Naive thymus-derived CD4-positive, alpha-beta T cell (primary cell): ENCODE measurements at regions of chr3 and their contacts with region 1.

Region 1: DNA sequence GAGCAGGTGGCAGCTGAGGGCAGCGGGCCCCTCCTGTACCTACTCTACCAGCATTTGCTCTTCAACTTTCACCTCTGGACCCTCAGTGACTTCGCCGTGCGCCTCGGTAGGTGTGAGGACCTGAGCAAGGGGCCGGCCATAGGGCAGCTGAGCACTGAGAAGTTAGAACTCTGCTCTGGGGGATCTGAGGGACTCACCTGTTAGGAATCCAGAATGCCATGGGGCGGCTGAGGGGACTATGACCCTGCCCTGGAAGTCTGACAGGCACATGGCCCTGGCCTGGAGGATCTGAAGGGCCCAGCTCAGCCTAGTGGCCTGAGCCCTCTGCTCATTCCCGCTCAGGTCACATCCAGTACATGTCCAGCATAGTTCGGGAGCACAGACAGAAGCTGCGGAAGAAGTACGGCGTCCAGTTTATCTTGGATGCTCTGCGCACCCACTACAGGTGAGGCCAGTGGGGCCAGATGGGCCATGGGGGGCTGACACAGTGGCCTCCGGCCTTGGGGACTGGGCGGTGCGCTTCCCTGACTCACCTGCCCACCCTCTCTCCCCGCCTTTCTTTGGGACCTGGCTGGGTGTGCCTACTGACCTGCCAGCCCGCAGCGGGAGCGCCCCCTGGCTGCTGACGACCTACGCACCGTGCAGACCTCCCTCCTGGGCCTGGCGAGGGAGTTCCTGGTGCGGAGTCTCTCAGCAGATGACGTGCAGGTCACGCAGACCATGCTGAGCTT is 18.8 kb downstream of the NBEAL2 start:
- DNase-seq: peak; percentile 53 to 84 (median 69)
- ATAC-seq: peak; percentile 85
- H3K4me3 ChIP-seq: no peak overlapping the region
- H3K4me3 Mint-ChIP-seq: no peak overlapping the region
- H3K27ac ChIP-seq: no peak overlapping the region
- H3K27ac Mint-ChIP-seq: peak overlapping the region in 5 of 9 donors; percentile 41 to 79 (median 55)
- H3K4me1 ChIP-seq: peaks cover 0 to 10% of the 10 kb centered on the region in 2 donors
- H3K4me1 Mint-ChIP-seq: peaks cover 7 to 18% (median 11%) of the 10 kb centered on the region in 7 donors
- H3K27me3 ChIP-seq: no peaks in the 10 kb centered on the region
- H3K27me3 Mint-ChIP-seq: no peaks in the 10 kb centered on the region

Region 2: DNA sequence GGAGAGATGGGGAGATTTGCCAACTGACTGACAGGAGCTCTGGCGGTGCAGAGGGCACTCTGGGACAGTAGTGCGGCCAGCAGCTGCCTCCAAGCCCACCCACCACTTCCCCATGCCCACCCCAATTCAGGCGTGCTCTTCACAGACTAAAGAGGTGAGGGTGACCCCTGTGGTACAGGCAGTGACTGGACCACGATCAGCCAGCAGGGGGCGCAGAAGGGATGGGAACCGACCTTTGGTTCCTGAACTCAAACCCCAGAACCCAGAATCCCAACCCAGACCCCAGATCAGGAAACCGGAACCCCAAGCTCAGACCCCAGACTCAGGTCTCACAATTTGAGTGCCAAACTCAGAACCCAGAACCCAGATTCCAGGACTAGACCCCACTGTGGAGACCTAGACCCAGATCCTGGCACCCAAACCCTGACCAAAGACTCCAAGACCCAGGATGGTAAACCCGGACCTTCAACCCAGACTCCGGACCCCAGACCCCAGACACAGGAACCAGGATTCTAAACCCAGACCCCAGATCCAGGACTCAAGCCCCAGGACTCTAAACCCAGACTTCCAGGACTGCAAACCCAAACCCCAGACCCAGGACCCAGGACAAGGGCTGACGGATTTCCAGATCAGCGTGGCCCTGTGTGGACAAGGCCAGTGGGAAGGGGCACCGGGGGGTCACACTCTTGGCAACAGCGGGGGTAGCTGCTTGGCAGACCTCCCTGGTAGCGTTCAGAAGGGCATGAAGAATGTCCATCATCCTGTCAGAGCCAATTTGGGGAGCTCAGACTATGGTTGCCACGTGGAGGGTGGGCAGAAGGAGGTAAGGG is 131.4 kb before region 1 on chr3:
- CTCF ChIA-PET with region 1: interaction called, 3 read pairs
- POLR2A ChIA-PET with region 1: no interaction called
- intact Hi-C with region 1: loop called in 1 of 2 experiments (anchors 2 kb)
- DNase-seq: peak; percentile 38 to 80 (median 66)
- ATAC-seq: peak; percentile 69
- H3K4me3 ChIP-seq: no peak overlapping the region
- H3K4me3 Mint-ChIP-seq: no peak overlapping the region
- H3K27ac ChIP-seq: no peak overlapping the region
- H3K27ac Mint-ChIP-seq: peak overlapping the region in 1 of 9 donors; percentile 21
- H3K4me1 ChIP-seq: no peaks in the 10 kb centered on the region
- H3K4me1 Mint-ChIP-seq: no peaks in the 10 kb centered on the region
- H3K27me3 ChIP-seq: no peaks in the 10 kb centered on the region
- H3K27me3 Mint-ChIP-seq: peaks cover 0 to 8% (median 0%) of the 10 kb centered on the region in 5 donors

Region 3: DNA sequence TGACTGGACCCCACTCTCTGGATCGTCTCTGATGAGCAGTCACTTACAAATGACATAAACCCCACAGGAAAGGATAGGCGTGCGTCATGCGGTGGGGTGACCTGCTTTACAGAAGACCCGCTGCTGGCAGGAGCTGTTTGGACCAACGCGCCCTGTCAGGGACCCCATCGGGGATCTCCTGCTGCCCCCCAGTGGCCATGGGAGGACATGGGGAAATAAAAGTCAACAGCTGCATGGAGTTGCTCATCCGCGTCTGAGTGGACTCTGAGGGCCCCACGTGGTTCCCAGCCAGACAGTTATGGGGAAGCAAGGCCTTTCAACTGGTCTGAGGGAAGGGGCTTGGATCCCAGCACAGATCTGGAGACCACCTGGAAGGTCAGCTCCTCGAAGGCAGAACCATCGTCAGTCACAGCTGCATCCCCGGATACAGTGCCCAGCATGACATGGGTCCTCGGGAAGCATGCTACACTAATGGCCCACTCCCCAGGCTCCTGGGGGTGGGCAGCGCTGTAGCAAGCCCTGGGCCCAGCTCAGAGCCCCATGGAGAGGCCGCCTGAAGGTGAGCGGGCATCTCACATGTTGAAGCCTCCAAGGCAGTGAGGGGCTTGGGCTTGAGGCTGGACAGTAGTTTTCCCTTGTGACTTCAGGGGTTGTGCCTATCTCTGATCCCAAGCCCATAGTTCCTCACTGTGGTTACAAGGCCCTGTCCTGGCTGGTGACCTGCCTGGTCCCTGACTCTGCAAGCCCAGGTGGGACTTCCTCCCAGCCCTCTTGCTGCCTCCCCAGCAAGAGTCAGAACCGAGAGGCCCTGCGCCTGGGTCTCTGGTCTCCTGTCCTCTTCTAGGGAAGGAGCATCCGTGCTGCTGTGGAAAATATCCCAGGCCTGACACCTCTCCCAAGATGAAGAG is 88.5 kb before region 1 on chr3:
- CTCF ChIA-PET with region 1: interaction called, 6 read pairs
- POLR2A ChIA-PET with region 1: no interaction called
- intact Hi-C with region 1: loop called in 1 of 2 experiments (anchors 1 kb)
- DNase-seq: peak; percentile 42 to 76 (median 64)
- ATAC-seq: peak; percentile 89
- H3K4me3 ChIP-seq: no peak overlapping the region
- H3K4me3 Mint-ChIP-seq: no peak overlapping the region
- H3K27ac ChIP-seq: no peak overlapping the region
- H3K27ac Mint-ChIP-seq: peak overlapping the region in 1 of 9 donors; percentile 6
- H3K4me1 ChIP-seq: peaks cover 11 to 17% of the 10 kb centered on the region in 2 donors
- H3K4me1 Mint-ChIP-seq: peaks cover 8 to 19% (median 17%) of the 10 kb centered on the region in 7 donors
- H3K27me3 ChIP-seq: no peaks in the 10 kb centered on the region
- H3K27me3 Mint-ChIP-seq: no peaks in the 10 kb centered on the region

Region 4: DNA sequence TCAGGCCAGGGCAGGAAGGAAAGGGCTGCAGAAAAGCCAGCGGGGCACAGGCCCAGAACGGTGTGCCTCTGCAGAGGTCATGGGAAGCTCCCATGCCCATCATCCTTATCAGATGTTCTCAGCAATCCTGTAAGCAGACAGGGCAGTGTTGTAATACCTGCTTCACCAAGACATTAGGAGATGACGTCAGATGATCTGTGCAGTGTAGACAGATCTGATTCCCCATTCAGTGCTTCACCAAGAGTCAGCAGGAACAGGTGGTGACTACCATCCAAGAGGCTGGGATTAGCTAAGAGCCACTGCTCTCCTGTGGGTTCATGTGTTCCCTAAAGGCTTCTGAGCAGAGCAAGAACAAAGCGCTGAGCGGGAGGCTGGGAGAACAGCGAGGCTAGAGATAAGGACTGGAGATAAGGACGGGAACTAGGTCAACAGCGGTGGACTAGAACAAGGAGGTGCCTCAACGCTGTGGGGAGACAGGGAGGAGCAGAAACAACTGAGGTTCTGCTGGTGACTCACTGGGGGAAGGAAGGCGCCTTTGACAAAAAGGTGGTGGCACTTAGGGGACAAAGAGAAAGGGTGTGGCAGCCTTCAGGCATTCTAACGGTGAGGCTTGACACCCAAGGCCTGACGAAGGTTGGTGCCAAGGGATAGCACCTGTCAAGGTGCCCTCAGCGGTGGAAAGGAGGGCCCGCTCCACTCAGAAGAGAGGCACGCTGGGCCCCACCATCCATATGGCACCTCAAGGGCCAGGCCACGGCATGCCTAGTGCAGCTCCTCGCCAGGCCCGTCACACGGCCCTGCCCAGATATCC is 50.1 kb before region 1 on chr3:
- CTCF ChIA-PET with region 1: interaction called, 3 read pairs
- POLR2A ChIA-PET with region 1: no interaction called
- intact Hi-C with region 1: loop called in 1 of 2 experiments (anchors 1 kb)
- DNase-seq: peak in 2 of 9 donors; percentile 45 to 58
- ATAC-seq: peak; percentile 77
- H3K4me3 ChIP-seq: no peak overlapping the region
- H3K4me3 Mint-ChIP-seq: peak overlapping the region; percentile 9 to 83 (median 76)
- H3K27ac ChIP-seq: peak overlapping the region; percentile 39
- H3K27ac Mint-ChIP-seq: peak overlapping the region; percentile 70 to 92 (median 86)
- H3K4me1 ChIP-seq: peaks cover 51 to 75% of the 10 kb centered on the region in 2 donors
- H3K4me1 Mint-ChIP-seq: peaks cover 77 to 97% (median 83%) of the 10 kb centered on the region in 7 donors
- H3K27me3 ChIP-seq: no peaks in the 10 kb centered on the region
- H3K27me3 Mint-ChIP-seq: no peaks in the 10 kb centered on the region